ENCODE measurements at regions of chr12 and their contacts with region 1.

Region 1: GRCh38 chr12:31682136-31682962 is 22.9 kb downstream of the ETFBKMT start:
- DNase-seq: peak; percentile 95
- ATAC-seq: peak; percentile 95
- H3K4me3 ChIP-seq: no peak overlapping the region
- H3K27ac ChIP-seq: no peak overlapping the region; the same call in 1 of the 2 replicates
- H3K4me1 ChIP-seq: peaks cover 3% of the 10 kb centered on the region; the same call in 1 of the 2 replicates
- H3K27me3 ChIP-seq: no peaks in the 10 kb centered on the region
- CTCF ChIP-seq: peak; percentile 77 to 93 (median 86)
- EP300 ChIP-seq: no peak
- POLR2A ChIP-seq: no peak
- RAD21 ChIP-seq: peak; percentile 100

Region 2: DNA sequence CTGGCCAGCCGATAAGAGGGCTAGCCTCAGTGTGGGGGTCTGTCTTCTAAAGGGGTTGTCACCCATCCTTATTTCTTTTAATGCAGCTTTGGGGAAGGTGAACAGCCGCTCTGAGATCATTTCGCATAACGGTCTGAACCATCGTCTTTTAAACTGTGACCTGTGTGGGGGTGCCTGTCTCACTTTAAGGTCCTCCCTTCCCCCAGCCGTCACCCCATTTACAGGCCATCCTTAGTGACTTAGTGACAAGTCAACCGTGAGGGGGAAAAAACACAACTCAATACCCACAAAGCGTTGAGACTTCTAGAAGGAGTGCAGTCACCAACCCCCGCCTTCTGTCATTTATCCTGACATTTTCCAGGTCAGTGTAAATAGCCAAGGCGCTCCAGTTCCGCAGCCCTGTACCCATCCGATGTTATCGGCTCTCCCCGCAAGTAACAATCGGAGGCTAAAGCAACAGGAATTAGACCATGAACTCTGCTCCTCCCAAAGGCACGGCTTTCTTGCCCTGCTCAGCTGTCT is 90.9 kb before region 1 on chr12:
- CTCF ChIA-PET with region 1: no interaction called
- POLR2A ChIA-PET with region 1: no interaction called
- RAD21 ChIA-PET with region 1: no interaction called
- SMC1A ChIA-PET with region 1: no interaction called
- in situ Hi-C with region 1: no loop called
- intact Hi-C with region 1: no loop called
- DNase-seq: no peak
- ATAC-seq: peak; percentile 18
- H3K4me3 ChIP-seq: peak overlapping the region; percentile 80
- H3K27ac ChIP-seq: peak overlapping the region; percentile 76
- H3K4me1 ChIP-seq: peaks cover 16% of the 10 kb centered on the region
- H3K27me3 ChIP-seq: no peaks in the 10 kb centered on the region
- CTCF ChIP-seq: no peak
- EP300 ChIP-seq: no peak
- POLR2A ChIP-seq: no peak
- RAD21 ChIP-seq: no peak

Region 3: GRCh38 chr12:31631784-31632183 is 50.6 kb before region 1 on chr12:
- CTCF ChIA-PET with region 1: no interaction called
- POLR2A ChIA-PET with region 1: no interaction called
- RAD21 ChIA-PET with region 1: no interaction called
- SMC1A ChIA-PET with region 1: no interaction called
- in situ Hi-C with region 1: no loop called
- intact Hi-C with region 1: no loop called
- DNase-seq: no peak
- ATAC-seq: no peak
- H3K4me3 ChIP-seq: no peak overlapping the region
- H3K27ac ChIP-seq: no peak overlapping the region
- H3K4me1 ChIP-seq: peaks cover 8% of the 10 kb centered on the region; the same call in 1 of the 2 replicates
- H3K27me3 ChIP-seq: no peaks in the 10 kb centered on the region
- CTCF ChIP-seq: no peak
- EP300 ChIP-seq: no peak
- POLR2A ChIP-seq: no peak
- RAD21 ChIP-seq: no peak

Region 4: GRCh38 chr12:31647086-31647491 is 35.3 kb before region 1 on chr12:
- CTCF ChIA-PET with region 1: interaction called, 22 read pairs
- POLR2A ChIA-PET with region 1: no interaction called
- RAD21 ChIA-PET with region 1: interaction called, 23 read pairs
- SMC1A ChIA-PET with region 1: interaction called, 6 read pairs
- in situ Hi-C with region 1: no loop called
- intact Hi-C with region 1: no loop called
- DNase-seq: no peak
- ATAC-seq: no peak
- H3K4me3 ChIP-seq: no peak overlapping the region
- H3K27ac ChIP-seq: no peak overlapping the region
- H3K4me1 ChIP-seq: no peaks in the 10 kb centered on the region
- H3K27me3 ChIP-seq: no peaks in the 10 kb centered on the region
- CTCF ChIP-seq: no peak
- EP300 ChIP-seq: no peak
- POLR2A ChIP-seq: no peak
- RAD21 ChIP-seq: no peak

Region 5: DNA sequence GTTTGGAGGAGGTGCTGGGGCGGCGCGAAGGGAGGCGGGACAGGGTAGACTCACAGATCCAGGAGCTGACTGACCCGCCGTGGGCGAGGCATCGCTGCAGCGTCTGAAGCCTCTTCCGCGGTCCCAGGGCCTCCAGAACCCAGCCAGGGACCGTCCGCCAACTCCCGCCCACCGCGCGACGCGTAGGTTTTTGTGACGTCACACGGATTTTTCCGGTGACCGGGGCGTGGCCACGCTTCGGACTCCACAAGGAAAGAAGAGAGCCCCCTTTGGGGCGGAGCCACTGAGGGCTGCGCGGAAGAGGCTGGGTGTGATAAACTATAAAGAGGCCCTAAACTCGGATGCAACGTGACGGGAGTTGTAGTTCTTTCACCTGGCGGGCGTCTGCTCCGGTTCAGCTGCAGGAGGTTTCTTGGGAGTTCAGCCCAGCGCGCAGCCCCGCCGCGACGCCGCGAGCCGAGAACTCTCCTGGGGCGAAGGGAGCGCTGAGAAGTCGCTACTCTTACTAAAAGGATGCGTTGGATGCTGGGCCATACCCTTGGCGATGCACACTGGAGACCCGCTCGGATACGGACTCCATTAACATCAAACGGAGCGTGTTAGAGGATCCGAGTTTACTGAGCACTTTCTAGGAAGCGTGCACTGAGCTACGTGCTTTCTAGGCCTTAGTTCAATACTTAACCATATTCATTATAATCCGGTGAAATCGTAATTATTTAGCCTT is 46.7 kb after region 1 on chr12 and contains the start of gene AMN1:
- CTCF ChIA-PET with region 1: interaction called, 9 read pairs
- POLR2A ChIA-PET with region 1: interaction called, 13 read pairs
- RAD21 ChIA-PET with region 1: interaction called, 12 read pairs
- SMC1A ChIA-PET with region 1: interaction called, 17 read pairs
- in situ Hi-C with region 1: no loop called
- intact Hi-C with region 1: loop called (anchors 2 kb)
- DNase-seq: peak; percentile 99
- ATAC-seq: peak; percentile 96
- H3K4me3 ChIP-seq: peak within 1 kb of the TSS; percentile 79
- H3K27ac ChIP-seq: peak within 1 kb of the TSS; percentile 97
- H3K4me1 ChIP-seq: peaks cover 17% of the 10 kb centered on the region
- H3K27me3 ChIP-seq: no peaks in the 10 kb centered on the region
- CTCF ChIP-seq: no peak
- EP300 ChIP-seq: peak in 1 of 2 experiments; percentile 46; a peak in 1 of 4 replicates
- POLR2A ChIP-seq: peak; percentile 92
- RAD21 ChIP-seq: no peak
- polyA plus RNA-seq, gene AMN1: 15.2 to 19.3 TPM

Region 6: DNA sequence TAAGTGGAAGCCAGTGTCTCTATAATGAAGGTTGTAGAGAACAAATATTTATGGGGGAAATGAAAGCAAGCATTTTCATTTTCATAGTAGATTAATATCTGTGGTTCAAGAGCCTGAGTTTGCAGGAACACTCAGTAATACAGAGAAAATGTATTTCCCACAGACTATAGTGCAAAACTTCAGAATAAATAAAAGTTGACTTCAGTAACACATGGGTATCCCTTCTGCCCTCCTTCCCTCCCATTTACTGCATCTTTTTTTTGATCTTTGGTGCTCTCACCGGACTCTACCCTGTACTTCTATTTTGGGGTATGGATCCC is 121.8 kb after region 1 on chr12:
- CTCF ChIA-PET with region 1: interaction called, 3 read pairs
- POLR2A ChIA-PET with region 1: interaction called, 4 read pairs
- RAD21 ChIA-PET with region 1: interaction called, 15 read pairs
- SMC1A ChIA-PET with region 1: interaction called, 9 read pairs
- in situ Hi-C with region 1: no loop called
- intact Hi-C with region 1: loop called (anchors 2 kb)
- DNase-seq: no peak
- ATAC-seq: peak; percentile 40
- H3K4me3 ChIP-seq: no peak overlapping the region
- H3K27ac ChIP-seq: peak overlapping the region; percentile 57
- H3K4me1 ChIP-seq: peaks cover 24% of the 10 kb centered on the region
- H3K27me3 ChIP-seq: no peaks in the 10 kb centered on the region
- CTCF ChIP-seq: no peak
- EP300 ChIP-seq: peak in 1 of 2 experiments; percentile 50; a peak in 1 of 4 replicates
- POLR2A ChIP-seq: no peak
- RAD21 ChIP-seq: 0 out of 2 replicates have a peak, but pooled peaks have one; percentile 1

Region 7: DNA sequence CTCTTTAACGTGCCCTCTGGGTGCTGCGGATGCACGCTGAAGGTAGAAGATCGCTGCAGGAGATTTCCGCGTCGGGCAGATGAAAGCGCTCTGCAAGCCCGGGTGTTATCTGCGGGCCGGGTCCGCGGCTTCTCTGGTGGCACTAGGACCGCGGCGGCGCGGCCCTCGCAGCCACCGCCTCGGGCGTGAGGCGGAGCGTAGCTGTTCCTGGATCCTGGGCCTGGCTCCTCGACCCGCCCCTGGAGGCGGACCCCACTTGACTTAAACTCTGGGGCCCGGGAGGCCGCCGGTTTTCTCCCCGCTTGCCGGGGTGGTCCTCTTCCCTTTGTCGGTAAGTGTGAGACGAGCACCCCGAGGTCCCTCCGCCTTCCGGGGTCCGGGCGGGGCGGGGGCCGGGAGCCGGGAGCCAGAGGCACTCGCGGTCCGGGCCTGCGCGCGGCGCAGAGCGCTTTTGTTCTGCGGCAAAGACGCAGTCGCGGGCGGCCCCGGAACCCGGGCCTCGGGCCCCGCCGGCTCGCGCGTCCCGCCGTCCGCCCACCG is 276.9 kb after region 1 on chr12 and contains the start of gene RESF1:
- CTCF ChIA-PET with region 1: interaction called, 4 read pairs
- POLR2A ChIA-PET with region 1: no interaction called
- RAD21 ChIA-PET with region 1: interaction called, 11 read pairs
- SMC1A ChIA-PET with region 1: interaction called, 6 read pairs
- in situ Hi-C with region 1: no loop called
- intact Hi-C with region 1: loop called (anchors 2 kb)
- DNase-seq: peak; percentile 57
- ATAC-seq: peak; percentile 92
- H3K4me3 ChIP-seq: peak within 1 kb of the TSS; percentile 86
- H3K27ac ChIP-seq: peak within 1 kb of the TSS; percentile 76
- H3K4me1 ChIP-seq: peaks cover 12% of the 10 kb centered on the region; the same call in 1 of the 2 replicates
- H3K27me3 ChIP-seq: no peaks in the 10 kb centered on the region
- CTCF ChIP-seq: no peak
- EP300 ChIP-seq: no peak
- POLR2A ChIP-seq: peak; percentile 81
- RAD21 ChIP-seq: no peak
- polyA plus RNA-seq, gene RESF1: 18.9 to 23.6 TPM

Region 8: DNA sequence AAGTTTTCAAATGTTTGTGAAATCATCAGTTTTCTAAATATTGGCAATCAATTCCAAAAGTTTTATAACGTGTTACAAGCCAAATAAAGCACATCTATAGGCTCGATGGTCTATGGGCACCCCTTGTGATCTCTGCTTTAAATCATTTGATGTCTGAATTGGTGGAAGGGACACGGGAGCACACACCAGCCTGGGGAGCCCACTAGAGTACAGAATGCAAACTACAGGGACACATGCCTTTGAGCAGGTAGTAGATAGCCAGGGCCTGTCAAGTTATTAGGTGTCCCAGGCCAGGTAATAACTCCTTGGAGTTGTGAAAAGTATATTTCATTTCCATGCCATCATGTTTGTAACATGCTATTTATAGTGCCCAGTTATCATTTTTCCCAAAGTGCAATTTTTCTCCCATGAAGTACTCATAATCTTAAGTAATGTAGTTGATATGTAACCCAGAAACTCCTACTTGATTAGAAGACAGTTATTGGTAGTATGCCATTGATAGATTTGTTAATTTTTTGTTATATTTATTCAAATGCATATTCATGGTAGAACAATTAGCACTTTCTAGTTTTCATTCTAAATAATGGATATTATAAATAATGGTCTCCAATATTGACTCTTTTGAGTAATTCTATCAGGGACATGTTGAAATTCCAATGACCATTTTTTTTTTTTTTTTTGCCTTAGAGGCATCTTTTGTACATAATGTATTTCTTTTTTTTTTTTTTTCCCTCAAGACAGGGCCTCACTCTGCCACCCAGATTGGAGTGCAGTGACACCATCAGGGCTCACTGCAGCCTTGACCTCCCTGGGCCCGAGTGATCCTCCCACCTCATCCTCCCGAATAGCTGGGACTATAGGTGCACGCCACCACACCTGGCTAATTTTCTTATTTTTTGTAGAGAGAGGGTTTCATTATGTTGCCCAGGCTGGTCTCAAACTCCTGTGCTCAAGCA is 620.1 kb after region 1 on chr12:
- CTCF ChIA-PET with region 1: interaction called, 3 read pairs
- POLR2A ChIA-PET with region 1: interaction called, 10 read pairs
- RAD21 ChIA-PET with region 1: interaction called, 3 read pairs
- SMC1A ChIA-PET with region 1: interaction called, 3 read pairs
- in situ Hi-C with region 1: loop called (anchors 5 kb)
- intact Hi-C with region 1: loop called (anchors 2 kb)
- DNase-seq: peak; percentile 63
- ATAC-seq: peak; percentile 100
- H3K4me3 ChIP-seq: no peak overlapping the region
- H3K27ac ChIP-seq: peak overlapping the region; percentile 69
- H3K4me1 ChIP-seq: peaks cover 9% of the 10 kb centered on the region
- H3K27me3 ChIP-seq: no peaks in the 10 kb centered on the region
- CTCF ChIP-seq: peak; percentile 90 to 91 (median 91)
- EP300 ChIP-seq: no peak
- POLR2A ChIP-seq: no peak
- RAD21 ChIP-seq: peak; percentile 97

Measured in GM12878 (cell line).